ENCODE measurements at regions of chr16 and their contacts with region 1.

Region 1: DNA sequence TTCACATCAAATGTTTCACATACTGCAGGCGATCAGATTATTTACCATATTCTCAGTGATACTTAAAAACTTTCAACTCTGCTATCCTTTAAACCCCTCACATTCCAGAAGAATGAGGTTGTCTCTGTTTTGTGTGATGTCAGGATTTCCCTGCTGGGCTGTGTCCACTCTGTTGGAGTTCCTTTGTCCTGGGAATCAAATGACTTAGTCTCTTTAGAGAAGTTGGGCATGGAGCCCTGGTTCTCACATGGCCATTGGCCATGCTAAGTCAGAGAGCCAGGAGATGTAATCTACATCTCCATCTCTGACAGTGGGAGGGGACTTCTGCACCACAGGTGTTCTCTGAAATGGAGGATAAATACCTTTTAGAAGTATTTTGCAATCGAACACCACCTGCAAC is 205.1 kb upstream of the MAF start:
- DNase-seq: no peak
- ATAC-seq: no peak

Region 2: DNA sequence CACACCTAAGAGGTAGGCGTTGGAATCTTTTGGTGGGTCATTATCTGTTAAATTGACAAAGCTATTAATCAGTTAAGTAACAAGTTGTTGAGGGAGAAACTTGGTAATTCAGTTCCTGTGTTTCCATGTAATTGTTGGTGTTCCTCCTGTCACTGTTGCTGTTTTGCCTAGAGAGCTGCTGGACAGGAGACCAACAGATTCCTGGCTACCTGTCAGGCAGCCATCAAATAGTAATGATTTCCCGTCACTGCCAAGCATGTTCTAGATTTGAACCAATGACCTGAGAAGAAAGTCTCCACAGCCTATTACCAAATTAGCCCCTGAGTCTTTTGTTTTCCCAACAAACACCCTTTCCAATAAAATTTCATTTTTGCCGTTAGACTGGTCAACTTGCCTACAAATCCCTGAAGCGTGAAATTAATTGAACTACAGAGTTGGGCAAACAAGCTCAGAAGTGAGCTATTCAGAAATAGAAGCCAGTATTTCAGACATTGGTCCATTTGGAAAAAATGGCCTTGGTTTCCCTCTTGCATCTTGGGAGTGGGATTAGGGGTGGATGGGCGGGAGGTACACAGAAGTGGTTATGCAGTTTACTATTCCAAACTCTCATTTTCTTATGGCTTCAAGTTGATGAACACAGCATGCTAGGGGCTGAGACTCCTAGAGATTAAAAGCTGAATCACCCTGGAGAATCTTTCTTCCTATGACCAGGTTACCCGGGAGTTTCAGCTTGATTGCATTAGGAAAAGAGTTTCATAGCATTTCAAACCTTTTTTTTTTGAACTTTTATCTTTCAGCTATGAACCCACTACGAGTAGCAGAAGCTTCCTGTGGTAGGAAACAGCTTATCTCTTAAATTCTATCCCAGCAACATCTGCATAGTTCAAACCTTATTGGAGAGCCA is 57.8 kb after region 1 on chr16:
- intact Hi-C with region 1: loop called in 1 of 2 experiments (anchors 10 kb)
- DNase-seq: no peak
- ATAC-seq: no peak

Region 3: GRCh38 chr16:79912592-79913310 is 107.1 kb after region 1 on chr16:
- intact Hi-C with region 1: no loop called
- DNase-seq: no peak
- ATAC-seq: no peak

Region 4: DNA sequence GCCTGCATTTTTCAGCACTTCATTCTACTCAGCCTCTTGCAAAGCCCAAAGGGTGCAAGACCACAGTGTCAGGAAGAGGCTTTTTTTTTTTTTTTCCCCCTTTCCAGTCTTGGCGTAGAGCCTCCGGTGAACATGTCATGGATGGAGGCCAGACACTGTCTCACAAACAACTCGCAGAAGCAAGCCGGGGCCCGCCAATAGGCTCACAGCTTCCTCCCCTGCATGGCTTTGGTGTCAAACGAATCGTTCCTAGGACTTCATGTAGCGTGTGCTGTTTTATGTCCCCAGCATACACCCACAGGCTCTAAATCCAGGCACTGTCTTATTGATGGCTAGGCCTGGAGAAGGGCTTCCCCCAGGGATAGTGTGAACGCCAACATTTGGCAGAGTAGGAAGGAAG is 252.6 kb after region 1 on chr16:
- intact Hi-C with region 1: no loop called
- DNase-seq: peak; percentile 41
- ATAC-seq: peak; percentile 73 to 78